HEK293 (cell line): ENCODE measurements at regions of chr6 and their contacts with region 1.

Region 1: GRCh38 chr6:6676910-6677441 is 88.5 kb downstream of the LY86 start:
- H3K4me3 ChIP-seq: no peak overlapping the region
- H3K27ac ChIP-seq: no peak overlapping the region
- H3K4me1 ChIP-seq: peaks cover 8% of the 10 kb centered on the region
- CTCF ChIP-seq: peak; percentile 72

Region 2: DNA sequence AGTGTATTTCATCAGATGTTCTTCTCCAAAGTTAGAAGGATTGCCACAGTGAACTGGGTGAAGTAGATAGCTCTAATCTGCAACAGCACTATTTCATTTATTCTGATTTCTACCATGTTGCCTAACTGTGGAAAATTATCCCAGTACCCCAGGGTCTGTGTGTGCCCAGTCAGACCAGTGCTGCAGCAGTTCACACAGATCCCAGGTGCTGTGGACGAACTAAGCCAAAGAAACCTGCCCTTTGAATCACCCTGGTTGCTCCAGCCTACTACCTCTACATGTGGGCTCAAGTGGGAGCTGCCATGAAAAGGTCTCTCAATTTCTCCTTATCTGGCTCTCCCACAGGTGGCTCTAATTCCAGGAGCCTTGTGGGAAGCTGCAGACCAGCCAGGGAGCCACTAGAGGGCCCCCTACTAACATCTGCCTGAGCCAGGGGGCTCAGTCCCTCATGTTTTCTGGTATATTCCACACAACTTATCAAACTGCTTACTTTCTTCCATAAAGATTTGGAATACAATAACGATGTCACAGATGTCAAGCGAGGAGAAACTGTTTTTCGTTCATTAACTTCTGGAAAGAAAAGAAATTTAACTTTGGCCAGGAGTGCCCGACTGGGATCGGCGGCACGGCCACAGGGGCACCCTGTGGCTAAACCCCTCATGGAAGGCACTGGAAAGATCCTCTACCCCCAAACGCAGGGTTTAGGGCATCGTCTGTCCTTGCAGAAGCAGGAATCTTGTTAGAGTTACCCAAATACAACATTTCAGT is 120.1 kb before region 1 on chr6:
- CTCF ChIA-PET with region 1: interaction called, 26 read pairs
- POLR2A ChIA-PET with region 1: no interaction called
- H3K4me3 ChIP-seq: no peak overlapping the region
- H3K27ac ChIP-seq: no peak overlapping the region
- H3K4me1 ChIP-seq: no peaks in the 10 kb centered on the region
- CTCF ChIP-seq: peak; percentile 54

Region 3: GRCh38 chr6:6661684-6662083 is 15.3 kb before region 1 on chr6:
- CTCF ChIA-PET with region 1: interaction called, 45 read pairs
- POLR2A ChIA-PET with region 1: interaction called, 3 read pairs
- H3K4me3 ChIP-seq: no peak overlapping the region
- H3K27ac ChIP-seq: no peak overlapping the region
- H3K4me1 ChIP-seq: no peaks in the 10 kb centered on the region
- CTCF ChIP-seq: no peak

Region 4: DNA sequence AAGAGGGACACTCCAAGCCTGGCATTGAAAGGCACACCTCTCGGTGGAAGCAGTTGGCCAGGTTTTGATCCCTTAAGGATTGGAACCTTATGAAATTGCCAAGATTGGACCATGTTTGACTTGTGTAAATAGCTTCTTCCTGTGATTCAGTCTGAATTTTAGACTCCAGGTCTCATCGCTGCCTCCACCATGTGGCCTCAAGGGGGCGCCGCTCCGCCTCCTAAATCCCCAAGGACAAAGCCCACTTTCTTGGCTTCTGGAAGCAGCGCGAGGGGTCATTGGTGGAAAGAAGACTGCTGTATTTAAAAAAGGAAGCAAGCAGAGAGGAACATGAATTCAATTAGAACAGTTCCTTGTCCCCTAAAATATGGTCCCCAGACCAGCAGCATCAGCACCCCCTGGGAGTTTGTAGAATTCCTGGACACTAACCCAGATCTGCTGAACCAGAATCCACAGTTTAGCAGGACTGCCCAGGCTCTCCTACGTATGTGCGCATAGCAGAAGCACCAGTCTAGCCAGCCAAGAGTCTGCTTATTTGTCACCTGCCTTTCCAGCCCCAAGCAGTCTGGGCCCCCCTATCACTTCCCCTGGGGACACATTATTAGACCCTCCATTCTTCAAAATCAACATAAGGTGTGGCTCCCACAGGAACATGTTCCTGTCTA is 20.0 kb after region 1 on chr6:
- CTCF ChIA-PET with region 1: interaction called, 72 read pairs
- POLR2A ChIA-PET with region 1: no interaction called
- H3K4me3 ChIP-seq: no peak overlapping the region
- H3K27ac ChIP-seq: no peak overlapping the region
- H3K4me1 ChIP-seq: peaks cover 10% of the 10 kb centered on the region
- CTCF ChIP-seq: peak; percentile 49

Region 5: GRCh38 chr6:6704452-6705425 is 27.8 kb after region 1 on chr6:
- CTCF ChIA-PET with region 1: interaction called, 15 read pairs
- POLR2A ChIA-PET with region 1: no interaction called
- H3K4me3 ChIP-seq: no peak overlapping the region
- H3K27ac ChIP-seq: no peak overlapping the region
- H3K4me1 ChIP-seq: peaks cover 2% of the 10 kb centered on the region; the same call in 1 of the 2 replicates
- CTCF ChIP-seq: no peak

Region 6: GRCh38 chr6:6724539-6725467 is 47.8 kb after region 1 on chr6:
- CTCF ChIA-PET with region 1: interaction called, 50 read pairs
- POLR2A ChIA-PET with region 1: no interaction called
- H3K4me3 ChIP-seq: no peak overlapping the region
- H3K27ac ChIP-seq: no peak overlapping the region
- H3K4me1 ChIP-seq: no peaks in the 10 kb centered on the region
- CTCF ChIP-seq: peak; percentile 37; the same call in 1 of the 2 replicates